ENCODE measurements at regions of chr21 and their contacts with region 1.

Region 1: GRCh38 chr21:44911389-44912157 is 9.1 kb downstream of the ITGB2 start:
- DNase-seq: peak; percentile 55 to 85 (median 73)
- ATAC-seq: peak; percentile 69 to 82
- H3K4me3 Mint-ChIP-seq: peak overlapping the region; percentile 63 to 91 (median 78)
- H3K27ac Mint-ChIP-seq: peak overlapping the region; percentile 89 to 98 (median 95)
- H3K4me1 Mint-ChIP-seq: peaks cover 38 to 89% (median 80%) of the 10 kb centered on the region in 4 donors
- H3K27me3 Mint-ChIP-seq: no peaks in the 10 kb centered on the region

Region 2: GRCh38 chr21:44892536-44893277 is 18.9 kb before region 1 on chr21:
- POLR2A ChIA-PET with region 1: interaction called, 100 read pairs
- DNase-seq: peak; percentile 61 to 81 (median 72)
- ATAC-seq: peak; percentile 87 to 90
- H3K4me3 Mint-ChIP-seq: peak overlapping the region in 1 of 10 donors; percentile 18
- H3K27ac Mint-ChIP-seq: peak overlapping the region; percentile 44 to 91 (median 79)
- H3K4me1 Mint-ChIP-seq: peaks cover 8 to 32% (median 22%) of the 10 kb centered on the region in 4 donors
- H3K27me3 Mint-ChIP-seq: no peaks in the 10 kb centered on the region

Region 3: DNA sequence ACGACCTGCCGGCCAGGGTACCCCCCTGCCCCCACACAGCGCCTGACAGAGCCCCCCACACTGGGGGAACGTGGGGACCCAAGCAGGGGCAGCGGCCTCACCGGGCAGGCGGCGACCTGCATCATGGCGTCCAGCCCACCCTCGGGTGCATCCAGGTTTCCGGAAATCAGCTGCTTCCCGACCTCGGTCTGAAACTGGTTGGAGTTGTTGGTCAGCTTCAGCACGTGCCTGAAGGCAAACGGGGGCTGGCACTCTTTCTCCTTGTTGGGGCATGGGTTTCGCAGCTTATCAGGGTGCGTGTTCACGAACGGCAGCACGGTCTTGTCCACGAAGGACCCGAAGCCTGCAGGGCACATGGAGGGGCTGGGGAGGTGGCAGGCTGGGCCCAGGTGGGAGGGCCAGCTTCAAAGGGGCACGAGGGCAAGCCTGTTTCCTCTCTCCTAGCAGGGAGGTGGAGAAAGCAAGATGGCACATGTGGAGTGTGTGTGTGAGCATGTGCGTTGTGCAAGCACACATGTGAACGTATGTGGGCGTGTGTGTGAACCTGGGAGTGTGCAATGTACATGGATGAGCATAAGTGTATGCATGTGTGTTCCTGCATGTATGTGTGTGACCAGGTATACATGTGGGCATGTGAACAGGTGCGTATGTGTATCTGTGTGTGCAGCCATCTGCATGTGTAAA is 10.0 kb before region 1 on chr21:
- POLR2A ChIA-PET with region 1: interaction called, 100 read pairs
- DNase-seq: peak in 1 of 10 donors; percentile 53
- ATAC-seq: no peak
- H3K4me3 Mint-ChIP-seq: no peak overlapping the region
- H3K27ac Mint-ChIP-seq: peak overlapping the region in 4 of 10 donors; percentile 11 to 75 (median 40)
- H3K4me1 Mint-ChIP-seq: peaks cover 10 to 48% (median 28%) of the 10 kb centered on the region in 4 donors
- H3K27me3 Mint-ChIP-seq: no peaks in the 10 kb centered on the region

Region 4: DNA sequence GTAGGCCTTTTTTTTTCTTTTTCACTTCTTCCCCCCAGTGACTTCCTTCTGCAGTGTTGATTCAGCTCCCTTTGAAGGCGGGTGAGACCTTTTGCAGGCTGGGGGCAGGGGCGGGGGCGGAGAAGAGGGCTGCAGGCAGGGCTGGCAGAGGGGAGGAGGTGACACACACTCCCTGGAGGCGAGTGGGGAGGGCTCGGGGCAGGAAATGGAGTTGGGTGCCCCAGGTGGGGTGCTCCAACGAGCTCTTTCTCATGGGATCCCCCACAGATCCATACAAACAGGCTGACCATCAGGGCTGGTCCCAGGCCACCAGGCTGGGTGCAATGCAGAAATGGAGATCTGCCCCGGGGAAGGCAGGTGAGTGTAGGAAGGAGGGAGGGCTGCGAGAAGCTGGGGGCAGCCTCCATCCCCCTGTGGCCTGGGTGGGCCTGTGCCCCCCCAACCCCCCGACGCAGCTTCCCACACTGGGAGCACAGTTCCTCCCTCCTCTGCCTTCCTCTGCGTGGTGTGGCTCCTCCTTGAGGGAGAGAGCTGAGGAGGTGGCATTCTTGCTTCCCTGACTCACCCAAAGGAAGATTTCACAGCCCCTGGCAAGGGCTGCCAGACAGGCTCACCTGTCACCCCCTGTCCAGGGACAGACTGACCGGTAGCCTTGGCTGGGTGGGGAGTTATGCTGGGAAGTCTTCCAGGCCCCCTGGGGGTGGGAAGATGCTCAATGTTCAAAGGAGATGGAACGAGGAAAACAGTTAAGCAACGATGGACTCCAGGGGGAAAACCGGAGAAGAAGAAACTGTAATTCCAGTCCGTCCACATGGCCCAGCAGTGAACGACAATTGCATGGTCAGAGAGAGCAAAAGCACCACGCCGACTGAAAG is 16.3 kb after region 1 on chr21:
- POLR2A ChIA-PET with region 1: interaction called, 703 read pairs
- DNase-seq: peak; percentile 75 to 96 (median 84)
- ATAC-seq: peak; percentile 69 to 82
- H3K4me3 Mint-ChIP-seq: peak overlapping the region; percentile 88 to 96 (median 91)
- H3K27ac Mint-ChIP-seq: peak overlapping the region; percentile 70 to 99 (median 96)
- H3K4me1 Mint-ChIP-seq: peaks cover 50 to 83% (median 78%) of the 10 kb centered on the region in 4 donors
- H3K27me3 Mint-ChIP-seq: no peaks in the 10 kb centered on the region

Region 5: GRCh38 chr21:44939532-44940115 is 28.1 kb after region 1 on chr21 and contains the start of gene SLX9:
- POLR2A ChIA-PET with region 1: interaction called, 703 read pairs
- DNase-seq: peak; percentile 66 to 83 (median 76)
- ATAC-seq: peak; percentile 93 to 94
- H3K4me3 Mint-ChIP-seq: peak within 1 kb of the TSS; percentile 82 to 93 (median 89)
- H3K27ac Mint-ChIP-seq: peak within 1 kb of the TSS; percentile 81 to 93 (median 88)
- H3K4me1 Mint-ChIP-seq: peaks cover 22 to 50% (median 41%) of the 10 kb centered on the region in 4 donors
- H3K27me3 Mint-ChIP-seq: no peaks in the 10 kb centered on the region
- polyA plus RNA-seq, gene SLX9: 11.7 to 13.5 (median 12.1) TPM